PC-9 (cell line): ENCODE measurements at regions of chr19 and their contacts with region 1.

Region 1: GRCh38 chr19:9645472-9645871 is 24.4 kb upstream of the ZNF561 start:
- DNase-seq: peak in 1 of 2 experiments; percentile 33
- H3K4me3 ChIP-seq: no peak overlapping the region
- H3K27ac ChIP-seq: no peak overlapping the region
- H3K4me1 ChIP-seq: peaks cover 13% of the 10 kb centered on the region
- H3K27me3 ChIP-seq: no peaks in the 10 kb centered on the region
- CTCF ChIP-seq: no peak

Region 2: DNA sequence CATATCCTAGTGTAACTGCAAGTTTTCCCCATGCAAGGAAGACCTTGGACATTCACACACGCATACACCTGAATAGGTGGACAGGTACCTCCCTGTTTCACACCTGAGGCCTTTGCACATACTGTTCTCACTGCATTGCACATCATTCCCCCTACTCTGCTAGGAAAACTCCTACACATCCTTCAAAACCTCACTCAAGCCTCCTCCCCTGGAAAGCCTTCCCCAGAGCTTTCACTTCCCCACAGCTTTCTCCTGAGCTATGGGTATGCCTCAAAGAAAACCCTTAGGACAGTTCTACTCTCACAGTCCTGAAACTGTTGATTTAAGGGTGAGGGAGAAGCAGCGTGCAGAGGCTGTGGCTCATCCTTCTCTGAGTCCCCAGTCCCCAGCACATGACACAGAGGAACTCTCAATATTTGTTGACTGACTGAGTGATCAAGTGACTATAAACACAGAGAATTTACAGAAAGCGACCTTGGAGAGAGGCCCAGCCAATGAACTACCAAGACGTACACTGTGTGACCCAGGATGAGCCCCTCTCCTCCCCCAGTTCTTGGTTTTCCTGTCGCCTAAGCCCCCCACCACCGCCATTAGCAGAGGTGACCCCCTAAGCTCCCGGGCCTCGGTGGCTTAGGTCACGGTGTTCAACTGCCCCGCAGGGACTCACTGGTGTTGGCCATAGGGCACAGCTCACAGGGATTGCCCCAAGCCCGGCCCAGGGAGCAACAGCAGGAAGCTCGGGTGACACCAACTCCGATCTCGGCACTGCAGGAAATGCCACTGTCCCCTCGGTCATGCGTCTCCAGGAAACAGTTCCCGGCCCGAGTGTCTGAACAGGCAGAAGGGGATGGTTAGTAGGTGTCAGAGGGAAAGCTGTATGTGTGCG is 1536.7 kb before region 1 on chr19:
- CTCF ChIA-PET with region 1: no interaction called
- POLR2A ChIA-PET with region 1: no interaction called
- intact Hi-C with region 1: no loop called
- DNase-seq: no peak
- H3K4me3 ChIP-seq: no peak overlapping the region
- H3K27ac ChIP-seq: no peak overlapping the region
- H3K4me1 ChIP-seq: peaks cover 10% of the 10 kb centered on the region
- H3K27me3 ChIP-seq: peaks cover 61% of the 10 kb centered on the region
- CTCF ChIP-seq: no peak

Region 3: GRCh38 chr19:9705836-9706235 is 60.4 kb after region 1 on chr19:
- CTCF ChIA-PET with region 1: interaction called, 14 read pairs
- POLR2A ChIA-PET with region 1: no interaction called
- intact Hi-C with region 1: no loop called
- DNase-seq: no peak
- H3K4me3 ChIP-seq: no peak overlapping the region
- H3K27ac ChIP-seq: no peak overlapping the region
- H3K4me1 ChIP-seq: no peaks in the 10 kb centered on the region
- H3K27me3 ChIP-seq: peaks cover 7% of the 10 kb centered on the region; the same call in 1 of the 2 replicates
- CTCF ChIP-seq: no peak

Region 4: GRCh38 chr19:9939301-9939913 is 293.9 kb after region 1 on chr19:
- CTCF ChIA-PET with region 1: no interaction called
- POLR2A ChIA-PET with region 1: interaction called, 20 read pairs
- intact Hi-C with region 1: no loop called
- DNase-seq: no peak
- H3K4me3 ChIP-seq: no peak overlapping the region
- H3K27ac ChIP-seq: no peak overlapping the region
- H3K4me1 ChIP-seq: no peaks in the 10 kb centered on the region
- H3K27me3 ChIP-seq: peaks cover 41% of the 10 kb centered on the region; the same call in 1 of the 2 replicates
- CTCF ChIP-seq: no peak